Posterior cingulate gyrus (tissue), 11 donors: ENCODE measurements at regions of chr6 and their contacts with region 1.

Region 1: GRCh38 chr6:41735427-41736356 is at the start of gene TFEB:
- DNase-seq: peak; percentile 95 to 99 (median 96)

Region 2: GRCh38 chr6:41655711-41656691 is 79.7 kb before region 1 on chr6:
- intact Hi-C with region 1: no loop called
- DNase-seq: peak in 3 of 10 donors; percentile 39 to 75 (median 49)

Region 3: GRCh38 chr6:41705996-41706835 is 29.5 kb before region 1 on chr6:
- intact Hi-C with region 1: loop called (anchors 1 kb)
- DNase-seq: peak; percentile 66 to 97 (median 82)